ENCODE measurements at regions of chr5 and their contacts with region 1.

Region 1: GRCh38 chr5:129767906-129768380 is 20.0 kb downstream of the MINAR2 start:
- DNase-seq: peak; percentile 84
- H3K4me3 Mint-ChIP-seq: no peak overlapping the region
- H3K27ac Mint-ChIP-seq: no peak overlapping the region
- H3K4me1 Mint-ChIP-seq: peaks cover 29% of the 10 kb centered on the region
- H3K27me3 Mint-ChIP-seq: no peaks in the 10 kb centered on the region
- CTCF ChIP-seq: peak; percentile 93

Region 2: DNA sequence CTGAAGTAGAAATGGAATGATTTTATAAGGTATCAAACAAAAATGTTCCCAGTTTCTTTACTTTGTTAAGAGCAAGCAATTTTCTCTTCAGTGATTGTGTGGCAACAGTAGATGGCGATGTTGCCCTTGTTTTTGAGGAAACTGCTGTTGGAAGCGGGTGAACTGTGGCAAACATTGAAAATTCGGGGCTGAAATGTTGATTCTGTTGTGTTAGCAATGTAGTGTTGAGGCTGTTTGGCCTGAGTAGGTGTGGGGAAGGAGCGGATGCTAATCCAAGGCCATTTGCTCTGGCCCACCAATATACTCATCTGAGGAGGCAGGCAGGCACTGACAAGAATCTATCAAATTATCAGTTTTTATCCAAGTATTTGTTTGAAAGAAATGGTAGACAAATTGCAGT is 1554.6 kb before region 1 on chr5:
- CTCF ChIA-PET with region 1: no interaction called
- intact Hi-C with region 1: loop called (anchors 10 kb)
- DNase-seq: peak; percentile 75
- H3K4me3 Mint-ChIP-seq: no peak overlapping the region
- H3K27ac Mint-ChIP-seq: peak overlapping the region; percentile 57
- H3K4me1 Mint-ChIP-seq: peaks cover 9% of the 10 kb centered on the region
- H3K27me3 Mint-ChIP-seq: no peaks in the 10 kb centered on the region
- CTCF ChIP-seq: peak; percentile 78

Region 3: GRCh38 chr5:129172580-129172979 is 595.4 kb before region 1 on chr5:
- CTCF ChIA-PET with region 1: no interaction called
- intact Hi-C with region 1: loop called (anchors 1 kb)
- DNase-seq: peak; percentile 5
- H3K4me3 Mint-ChIP-seq: no peak overlapping the region
- H3K27ac Mint-ChIP-seq: no peak overlapping the region
- H3K4me1 Mint-ChIP-seq: no peaks in the 10 kb centered on the region
- H3K27me3 Mint-ChIP-seq: no peaks in the 10 kb centered on the region
- CTCF ChIP-seq: no peak

Region 4: DNA sequence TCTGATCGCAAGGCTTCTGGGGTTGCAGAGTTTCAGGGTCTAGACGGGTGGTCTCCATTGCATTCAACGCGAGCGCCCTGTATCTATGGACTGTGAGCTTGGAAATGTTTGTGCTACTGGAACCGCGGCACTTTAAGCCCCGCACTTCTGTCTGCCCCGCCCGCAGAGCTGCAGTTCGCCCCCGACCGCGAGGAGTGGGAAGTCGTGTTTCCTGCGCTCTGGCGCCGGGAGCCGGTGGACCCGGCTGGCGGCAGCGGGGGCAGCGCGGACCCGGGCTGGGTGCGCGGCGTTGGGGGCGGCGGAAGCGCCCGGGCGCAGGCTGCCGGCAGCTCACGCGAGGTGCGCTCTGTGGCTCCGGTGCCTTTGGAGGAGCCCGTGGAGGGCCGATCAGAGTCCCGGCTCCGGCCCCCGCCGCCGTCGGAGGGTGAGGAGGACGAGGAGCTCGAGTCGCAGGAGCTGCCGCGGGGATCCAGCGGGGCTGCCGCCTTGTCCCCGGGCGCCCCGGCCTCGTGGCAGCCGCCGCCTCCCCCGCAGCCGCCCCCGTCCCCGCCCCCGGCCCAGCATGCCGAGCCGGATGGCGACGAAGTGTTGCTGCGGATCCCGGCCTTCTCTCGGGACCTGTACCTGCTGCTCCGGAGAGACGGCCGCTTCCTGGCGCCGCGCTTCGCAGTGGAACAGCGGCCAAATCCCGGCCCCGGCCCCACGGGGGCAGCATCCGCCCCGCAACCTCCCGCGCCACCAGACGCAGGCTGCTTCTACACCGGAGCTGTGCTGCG is 306.8 kb before region 1 on chr5:
- CTCF ChIA-PET with region 1: interaction called, 5 read pairs
- intact Hi-C with region 1: loop called (anchors 2 kb)
- DNase-seq: peak; percentile 90
- H3K4me3 Mint-ChIP-seq: peak overlapping the region; percentile 78
- H3K27ac Mint-ChIP-seq: no peak overlapping the region
- H3K4me1 Mint-ChIP-seq: peaks cover 9% of the 10 kb centered on the region
- H3K27me3 Mint-ChIP-seq: peaks cover 9% of the 10 kb centered on the region
- CTCF ChIP-seq: peak; percentile 77

Region 5: GRCh38 chr5:129852747-129853352 is 84.9 kb after region 1 on chr5:
- CTCF ChIA-PET with region 1: interaction called, 87 read pairs
- intact Hi-C with region 1: loop called (anchors 1 kb)
- DNase-seq: peak; percentile 89
- H3K4me3 Mint-ChIP-seq: no peak overlapping the region
- H3K27ac Mint-ChIP-seq: no peak overlapping the region
- H3K4me1 Mint-ChIP-seq: no peaks in the 10 kb centered on the region
- H3K27me3 Mint-ChIP-seq: no peaks in the 10 kb centered on the region
- CTCF ChIP-seq: peak; percentile 95

Region 6: GRCh38 chr5:130126746-130127145 is 358.8 kb after region 1 on chr5:
- CTCF ChIA-PET with region 1: no interaction called
- intact Hi-C with region 1: no loop called
- DNase-seq: no peak
- H3K4me3 Mint-ChIP-seq: no peak overlapping the region
- H3K27ac Mint-ChIP-seq: no peak overlapping the region
- H3K4me1 Mint-ChIP-seq: no peaks in the 10 kb centered on the region
- H3K27me3 Mint-ChIP-seq: no peaks in the 10 kb centered on the region
- CTCF ChIP-seq: no peak

Region 7: DNA sequence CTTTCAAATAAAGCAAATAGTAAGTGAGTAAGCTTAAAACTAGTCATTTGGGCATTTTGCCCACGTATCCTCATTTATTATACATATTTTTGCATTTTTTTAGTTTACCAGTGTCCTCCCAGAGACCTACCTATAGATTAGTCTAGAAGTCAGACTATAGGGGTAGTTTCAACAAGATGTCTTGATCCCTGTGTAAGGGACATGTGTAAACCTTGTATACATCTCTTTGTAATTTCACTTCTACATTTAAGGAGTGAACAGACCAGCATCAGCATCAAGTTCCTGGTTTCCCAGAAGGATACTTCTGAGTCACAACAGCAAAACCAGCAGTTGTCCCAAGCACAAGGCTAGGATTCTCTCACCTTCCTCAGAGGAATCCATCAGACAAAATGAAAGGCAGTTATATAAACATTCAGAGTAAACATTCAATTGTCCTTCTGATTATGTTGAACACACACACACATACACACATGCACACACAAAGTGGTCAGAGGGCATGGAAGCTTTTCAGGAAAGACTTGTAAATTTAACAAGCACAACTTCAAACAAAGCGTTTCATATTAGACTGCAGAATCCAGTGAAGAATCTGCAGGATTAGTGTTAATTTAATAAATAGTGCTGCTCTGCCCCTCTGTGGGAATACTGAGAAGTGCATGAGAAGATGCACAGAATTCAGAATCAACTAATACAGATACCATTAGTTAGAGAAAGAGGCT is 1341.8 kb after region 1 on chr5:
- CTCF ChIA-PET with region 1: no interaction called
- intact Hi-C with region 1: loop called (anchors 1 kb)
- DNase-seq: peak; percentile 49
- H3K4me3 Mint-ChIP-seq: no peak overlapping the region
- H3K27ac Mint-ChIP-seq: no peak overlapping the region
- H3K4me1 Mint-ChIP-seq: no peaks in the 10 kb centered on the region
- H3K27me3 Mint-ChIP-seq: no peaks in the 10 kb centered on the region
- CTCF ChIP-seq: peak; percentile 66